ENCODE measurements at regions of chr16 and their contacts with region 1.

Region 1: DNA sequence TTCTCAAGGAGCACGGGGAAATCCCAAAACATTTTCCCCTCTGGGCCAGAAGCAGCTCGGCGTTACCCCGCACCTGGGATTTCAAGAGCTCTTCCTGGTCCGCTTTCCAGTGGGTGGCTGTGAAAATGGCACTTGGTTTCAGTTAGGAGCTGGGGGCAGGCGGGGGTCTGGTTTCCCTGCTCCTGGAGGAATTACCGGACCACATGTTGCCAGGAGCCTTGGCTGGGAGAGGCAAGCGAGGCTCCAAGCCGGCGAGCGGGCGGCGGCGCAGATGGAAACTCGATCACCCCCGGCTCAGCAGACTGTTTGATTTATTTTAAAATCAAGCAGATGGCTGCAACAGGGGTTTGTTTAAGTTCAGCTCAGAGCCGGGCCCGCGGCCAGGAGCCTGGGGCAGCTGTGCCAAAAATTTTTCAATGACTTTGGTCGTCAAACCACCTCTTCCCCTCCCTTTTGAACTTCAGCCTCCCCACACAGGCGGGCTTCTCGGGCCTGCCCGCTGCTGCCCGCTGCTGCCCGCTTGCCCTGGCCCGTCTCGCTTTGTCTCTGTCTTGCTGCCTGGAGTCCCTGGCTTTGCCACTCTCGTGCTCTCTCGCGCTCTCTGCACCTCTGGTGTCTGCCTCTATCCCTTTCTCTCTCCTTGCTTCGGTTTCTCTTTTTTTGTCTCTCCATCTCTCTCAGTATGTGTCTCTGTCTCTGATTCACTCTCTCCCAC is 108.0 kb upstream of the CIBAR2 start:
- DNase-seq: peak; percentile 93
- H3K4me3 ChIP-seq: peak overlapping the region in 3 of 4 donors; percentile 28 to 38 (median 35)
- H3K27ac ChIP-seq: peak overlapping the region; percentile 71 to 83 (median 76)
- H3K4me1 ChIP-seq: peaks cover 0 to 25% (median 21%) of the 10 kb centered on the region in 4 donors
- H3K27me3 ChIP-seq: no peaks in the 10 kb centered on the region
- CTCF ChIP-seq: no peak
- EP300 ChIP-seq: peak in 1 of 4 donors; percentile 13
- POLR2A ChIP-seq: no peak

Region 2: GRCh38 chr16:85137323-85138072 is 82.8 kb before region 1 on chr16:
- intact Hi-C with region 1: loop called (anchors 1 kb)
- DNase-seq: peak; percentile 99
- H3K4me3 ChIP-seq: peak overlapping the region; percentile 20 to 42 (median 35)
- H3K27ac ChIP-seq: peak overlapping the region; percentile 72 to 85 (median 80)
- H3K4me1 ChIP-seq: peaks cover 0 to 34% (median 30%) of the 10 kb centered on the region in 4 donors
- H3K27me3 ChIP-seq: no peaks in the 10 kb centered on the region
- CTCF ChIP-seq: no peak
- EP300 ChIP-seq: peak in 2 of 4 donors; percentile 79 to 87
- POLR2A ChIP-seq: no peak

Region 3: GRCh38 chr16:85270374-85270773 is 50.1 kb after region 1 on chr16:
- intact Hi-C with region 1: no loop called
- DNase-seq: no peak
- H3K4me3 ChIP-seq: no peak overlapping the region
- H3K27ac ChIP-seq: no peak overlapping the region
- H3K4me1 ChIP-seq: no peaks in the 10 kb centered on the region
- H3K27me3 ChIP-seq: no peaks in the 10 kb centered on the region
- CTCF ChIP-seq: no peak
- EP300 ChIP-seq: no peak
- POLR2A ChIP-seq: no peak